ENCODE measurements at regions of chr7 and their contacts with region 1.

Region 1: GRCh38 chr7:4753711-4754432 is 21.6 kb upstream of the AP5Z1 start:
- DNase-seq: peak; percentile 66 to 94 (median 84)

Region 2: GRCh38 chr7:4641667-4642467 is 112.0 kb before region 1 on chr7:
- intact Hi-C with region 1: loop called (anchors 5 kb)
- DNase-seq: peak; percentile 60 to 94 (median 86)

Region 3: GRCh38 chr7:4681886-4682620 is 71.8 kb before region 1 on chr7 and contains the start of gene FOXK1:
- intact Hi-C with region 1: loop called (anchors 5 kb)
- DNase-seq: peak in 41 of 42 donors; percentile 19 to 90 (median 81)